Motor neuron (in vitro differentiated cells): ENCODE measurements at regions of chr1 and their contacts with region 1.

Region 1: DNA sequence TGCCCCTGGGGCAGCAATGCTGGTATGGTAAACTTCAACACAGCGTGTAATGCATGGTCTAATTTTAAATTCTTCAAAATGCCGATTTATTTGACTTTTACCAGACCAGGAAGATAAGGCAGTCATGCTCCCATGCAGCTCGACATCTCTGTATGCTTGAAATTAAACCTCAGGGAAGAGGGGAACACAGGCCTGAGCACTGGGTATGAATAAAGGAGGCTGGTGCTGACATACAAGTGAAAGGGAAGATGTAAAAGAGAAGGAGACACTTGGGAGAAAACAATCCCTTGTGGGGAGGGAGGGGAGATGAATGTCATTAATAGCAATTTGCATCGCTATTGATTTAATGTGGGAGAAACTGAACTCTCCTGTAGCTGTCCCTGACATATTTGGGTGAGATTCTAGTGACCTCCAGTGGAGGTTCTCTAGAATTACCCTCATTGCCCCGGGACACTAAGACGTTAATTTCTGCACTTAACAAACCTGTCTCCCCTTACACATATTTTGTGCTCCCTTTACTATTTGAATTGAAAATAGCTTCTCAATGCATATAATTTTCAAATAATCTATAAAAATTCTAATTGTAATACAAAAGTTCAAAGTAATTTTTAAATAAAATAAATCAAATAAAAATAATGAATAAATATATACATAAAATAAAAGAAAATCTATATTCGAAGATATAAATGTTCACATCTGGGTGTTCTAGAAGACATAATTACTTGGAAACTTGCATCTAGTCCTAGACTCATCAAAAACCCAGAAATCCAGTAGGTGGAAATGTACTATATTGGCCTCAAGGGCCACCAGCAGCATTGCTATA is 283.1 kb downstream of the LMX1A start:
- ATAC-seq: peak; percentile 65 to 91 (median 86)
- H3K4me3 ChIP-seq: no peak overlapping the region
- H3K27ac ChIP-seq: no peak overlapping the region
- H3K4me1 ChIP-seq: peaks cover 4 to 12% of the 10 kb centered on the region in 2 donors

Region 2: DNA sequence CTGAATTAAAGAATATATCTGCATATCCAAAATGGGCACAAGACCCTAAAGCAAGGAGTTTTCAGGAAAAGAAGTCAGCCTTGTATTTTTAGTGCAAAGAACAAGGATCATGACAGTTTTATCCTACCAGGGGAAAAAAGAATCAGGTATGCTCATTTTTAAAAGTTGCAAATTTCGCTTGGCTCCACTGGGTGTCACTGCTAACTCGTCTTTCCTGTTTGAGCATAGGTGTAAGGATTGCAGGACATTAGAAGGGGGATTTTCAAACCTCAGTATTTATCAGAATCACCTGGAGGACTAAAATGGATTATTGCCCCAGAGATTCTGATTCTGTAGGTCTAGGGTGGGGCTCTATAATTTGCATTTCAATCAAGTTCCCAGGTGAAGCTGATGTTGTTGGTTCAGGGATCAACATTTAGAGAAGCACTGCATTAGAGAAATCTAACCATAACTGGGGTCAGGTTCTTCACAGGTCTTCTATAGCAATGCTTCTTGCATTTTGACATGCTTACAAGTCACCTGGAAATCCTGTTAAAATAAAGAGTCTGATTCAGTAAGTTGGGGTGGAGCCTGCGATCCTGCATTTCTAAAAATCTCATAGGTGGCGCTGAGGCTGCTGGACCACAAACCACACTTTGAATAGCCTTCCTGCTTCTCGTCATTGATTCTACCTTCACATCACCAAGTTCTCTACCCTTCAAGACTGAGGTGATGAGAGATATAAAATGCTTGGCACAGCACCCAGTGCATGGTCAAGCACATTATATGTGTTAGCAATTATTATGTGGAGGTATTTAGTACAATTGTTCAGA is 1712.1 kb before region 1 on chr1:
- in situ Hi-C with region 1: loop called in 3 of 9 experiments (anchors 25 kb)
- ATAC-seq: peak in 7 of 8 experiments; percentile 17 to 63 (median 55)
- H3K4me3 ChIP-seq: no peak overlapping the region
- H3K27ac ChIP-seq: no peak overlapping the region
- H3K4me1 ChIP-seq: peaks cover 0 to 2% of the 10 kb centered on the region in 2 donors

Region 3: DNA sequence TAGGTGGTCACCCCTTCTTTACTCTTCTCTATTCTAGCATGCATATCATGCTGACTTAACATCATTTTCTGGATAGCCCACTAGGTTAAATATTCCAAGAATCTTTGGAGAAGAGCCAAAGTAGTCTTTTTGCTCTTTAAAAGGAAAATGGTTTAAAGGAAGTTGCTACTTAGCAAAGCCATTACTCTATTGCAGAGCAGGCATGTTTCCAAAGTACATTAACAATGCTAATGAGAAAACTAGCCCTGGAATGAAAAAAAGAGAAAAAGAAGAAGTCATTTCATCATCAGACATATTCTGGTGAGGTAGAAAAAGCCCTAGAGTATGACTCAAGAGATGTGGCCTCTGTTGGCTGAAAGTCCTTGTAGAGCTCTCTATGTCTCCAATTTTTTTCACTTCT is 1677.6 kb before region 1 on chr1:
- in situ Hi-C with region 1: loop called in 3 of 9 experiments (anchors 25 kb)
- ATAC-seq: peak in 6 of 8 experiments; percentile 19 to 99 (median 62)
- H3K4me3 ChIP-seq: no peak overlapping the region
- H3K27ac ChIP-seq: no peak overlapping the region
- H3K4me1 ChIP-seq: peaks cover 3 to 27% of the 10 kb centered on the region in 2 donors

Region 4: DNA sequence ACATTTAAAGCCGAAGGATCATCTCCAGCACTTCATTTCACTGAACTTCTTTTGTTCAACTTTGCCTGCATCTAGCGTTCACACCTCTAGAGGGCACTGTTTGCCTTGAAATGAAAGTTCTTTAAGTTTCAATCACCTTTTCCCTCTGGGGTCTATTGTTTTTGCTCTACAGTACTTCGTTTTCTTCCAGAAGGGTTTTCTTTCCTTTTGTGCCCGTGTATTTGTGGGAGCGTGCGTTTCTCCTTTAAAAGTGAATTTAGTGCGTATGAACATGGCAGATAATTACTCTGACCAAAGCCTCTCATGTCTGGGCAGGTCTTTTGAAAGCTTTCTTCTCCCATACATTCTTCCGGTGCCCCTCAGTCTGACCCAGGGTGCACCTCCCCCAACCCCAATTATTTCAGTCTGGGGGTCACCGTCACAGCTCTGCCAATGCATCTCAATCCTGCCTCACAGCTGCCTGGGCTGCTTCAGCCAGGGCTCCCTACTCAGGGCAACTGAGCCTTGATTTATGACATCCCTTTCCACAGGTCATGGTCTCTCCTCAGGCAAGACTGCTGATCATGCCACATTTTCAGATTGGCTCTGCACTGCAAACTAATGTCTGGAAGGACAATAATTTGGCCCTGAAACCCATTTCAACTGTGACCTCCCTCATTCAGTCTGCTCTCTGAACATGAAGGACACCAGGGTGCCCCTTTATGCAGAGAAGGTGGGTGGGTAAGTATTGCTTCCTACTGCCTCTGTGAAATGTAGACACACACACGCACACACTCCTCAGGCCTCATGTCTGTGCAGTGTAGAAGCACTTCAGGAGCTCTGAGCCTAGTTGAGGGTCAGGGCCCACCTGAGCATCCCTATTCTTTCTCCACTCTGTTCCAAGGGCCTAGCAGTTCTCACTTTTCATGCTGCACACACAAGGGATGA is 1663.1 kb before region 1 on chr1:
- in situ Hi-C with region 1: loop called in 2 of 9 experiments (anchors 25 kb)
- ATAC-seq: peak in 7 of 8 experiments; percentile 46 to 92 (median 84)
- H3K4me3 ChIP-seq: peak overlapping the region in 2 of 5 donors; percentile 7 to 9
- H3K27ac ChIP-seq: peak overlapping the region; percentile 3 to 11
- H3K4me1 ChIP-seq: peaks cover 20 to 25% of the 10 kb centered on the region in 2 donors

Region 5: GRCh38 chr1:164558461-164559341 is 514.7 kb before region 1 on chr1 and contains the start of gene PBX1:
- in situ Hi-C with region 1: loop called in 2 of 9 experiments (anchors 25 kb)
- ATAC-seq: peak; percentile 96 to 99 (median 98)
- H3K4me3 ChIP-seq: peak within 1 kb of the TSS; percentile 57 to 94 (median 70)
- H3K27ac ChIP-seq: peak within 1 kb of the TSS; percentile 80
- H3K4me1 ChIP-seq: peaks cover 0 to 8% of the 10 kb centered on the region in 2 donors
- total RNA-seq, gene PBX1: 27.8 to 268 (median 147) TPM

Region 6: GRCh38 chr1:164748253-164748899 is 325.0 kb before region 1 on chr1:
- in situ Hi-C with region 1: no loop called
- ATAC-seq: peak in 6 of 8 experiments; percentile 20 to 53 (median 38)
- H3K4me3 ChIP-seq: no peak overlapping the region
- H3K27ac ChIP-seq: peak overlapping the region; percentile 5 to 44
- H3K4me1 ChIP-seq: peaks cover 24 to 55% of the 10 kb centered on the region in 2 donors

Region 7: DNA sequence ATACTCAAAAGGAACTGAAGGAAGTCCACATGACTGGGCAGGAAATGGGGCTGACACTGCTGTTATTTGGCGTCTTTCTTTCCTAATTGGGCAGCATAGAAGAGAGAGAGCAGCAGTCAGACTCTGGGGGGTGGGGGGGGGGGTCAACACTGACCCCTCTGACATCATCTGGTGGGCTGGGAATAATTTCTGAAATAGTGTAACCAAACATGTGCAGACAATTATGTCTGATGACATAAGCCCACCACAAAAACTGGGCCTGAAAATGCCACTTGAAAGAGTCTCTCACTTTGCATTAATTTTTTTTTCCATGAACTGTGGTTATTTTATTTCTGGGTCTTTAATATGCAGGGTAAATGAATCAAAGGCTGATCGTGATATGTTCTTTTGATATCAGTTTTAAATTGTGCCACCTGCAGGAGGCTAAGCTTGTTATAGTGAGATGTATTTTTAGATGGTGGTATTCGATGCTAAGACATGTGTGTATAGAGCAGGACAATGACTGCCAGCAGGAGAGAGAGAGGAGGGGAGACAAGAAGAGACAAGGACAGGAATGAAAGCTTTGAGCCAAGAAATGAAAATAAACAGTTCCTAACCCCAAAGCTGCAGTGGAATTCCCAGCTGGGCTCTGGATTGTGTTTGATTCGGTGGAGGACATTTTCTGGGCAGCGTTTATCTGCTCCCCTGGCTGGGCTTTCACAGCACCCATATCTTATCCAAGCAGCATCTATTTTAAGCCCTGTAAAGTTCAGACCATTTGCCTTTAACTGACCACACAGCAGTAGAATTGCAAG is 249.7 kb before region 1 on chr1:
- in situ Hi-C with region 1: loop called in 1 of 9 experiments (anchors 25 kb)
- ATAC-seq: peak in 2 of 8 experiments; percentile 19 to 83
- H3K4me3 ChIP-seq: no peak overlapping the region
- H3K27ac ChIP-seq: no peak overlapping the region
- H3K4me1 ChIP-seq: peaks cover 0 to 7% of the 10 kb centered on the region in 2 donors

Region 8: GRCh38 chr1:164971921-164972415 is 101.4 kb before region 1 on chr1:
- in situ Hi-C with region 1: no loop called
- ATAC-seq: peak in 1 of 8 experiments; percentile 8
- H3K4me3 ChIP-seq: no peak overlapping the region
- H3K27ac ChIP-seq: no peak overlapping the region
- H3K4me1 ChIP-seq: no peaks in the 10 kb centered on the region